Ascending aorta (tissue), 2 donors: ENCODE measurements at regions of chr3 and their contacts with region 1.

Region 1: GRCh38 chr3:134212906-134213665 is 37.6 kb downstream of the RYK start:
- DNase-seq: peak in 1 of 2 donors; percentile 87
- H3K4me3 ChIP-seq: no peak overlapping the region
- H3K27ac ChIP-seq: no peak overlapping the region
- H3K4me1 ChIP-seq: no peaks in the 10 kb centered on the region
- H3K27me3 ChIP-seq: no peaks in the 10 kb centered on the region
- CTCF ChIP-seq: peak; percentile 82 to 96 (median 95)

Region 2: GRCh38 chr3:134134240-134134639 is 78.8 kb before region 1 on chr3:
- intact Hi-C with region 1: no loop called
- DNase-seq: no peak
- H3K4me3 ChIP-seq: no peak overlapping the region
- H3K27ac ChIP-seq: no peak overlapping the region
- H3K4me1 ChIP-seq: no peaks in the 10 kb centered on the region
- H3K27me3 ChIP-seq: no peaks in the 10 kb centered on the region
- CTCF ChIP-seq: no peak

Region 3: DNA sequence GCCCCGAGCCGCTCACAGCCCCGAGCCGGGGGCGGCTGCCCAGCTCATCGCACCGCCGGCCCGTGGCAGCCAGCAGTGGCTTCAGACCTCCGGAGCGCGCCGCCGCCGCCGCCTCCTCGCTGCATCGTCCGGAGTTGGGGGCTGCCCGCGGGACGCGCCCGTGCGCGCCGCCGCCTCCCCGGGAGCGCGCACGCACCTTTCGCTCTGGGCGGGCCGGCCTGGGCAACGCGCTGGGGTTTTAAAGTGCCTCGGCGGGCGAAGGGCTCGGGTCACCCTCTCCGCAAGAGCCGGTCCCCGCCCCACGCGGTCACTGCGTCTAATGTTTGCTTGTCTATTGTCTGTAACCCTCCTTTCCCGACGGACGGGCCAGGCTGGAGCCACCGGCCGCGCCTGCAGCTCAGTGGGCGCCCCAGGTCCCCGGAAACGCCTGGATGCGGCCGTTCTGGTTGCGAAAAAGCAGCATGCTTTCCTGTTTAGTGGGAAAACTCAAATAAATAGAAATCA is 37.7 kb after region 1 on chr3 and contains the start of gene RYK:
- intact Hi-C with region 1: loop called (anchors 5 kb)
- DNase-seq: peak; percentile 32 to 88
- H3K4me3 ChIP-seq: peak within 1 kb of the TSS; percentile 85 to 98
- H3K27ac ChIP-seq: peak within 1 kb of the TSS; percentile 87 to 98
- H3K4me1 ChIP-seq: peaks cover 0 to 15% of the 10 kb centered on the region in 2 donors
- H3K27me3 ChIP-seq: no peaks in the 10 kb centered on the region
- CTCF ChIP-seq: no peak
- total RNA-seq, gene RYK: 13.5 TPM

Region 4: GRCh38 chr3:134299185-134299887 is 86.2 kb after region 1 on chr3:
- intact Hi-C with region 1: loop called (anchors 1 kb)
- DNase-seq: no peak
- H3K4me3 ChIP-seq: no peak overlapping the region
- H3K27ac ChIP-seq: no peak overlapping the region
- H3K4me1 ChIP-seq: no peaks in the 10 kb centered on the region
- H3K27me3 ChIP-seq: no peaks in the 10 kb centered on the region
- CTCF ChIP-seq: peak; percentile 25 to 55 (median 31)

Region 5: DNA sequence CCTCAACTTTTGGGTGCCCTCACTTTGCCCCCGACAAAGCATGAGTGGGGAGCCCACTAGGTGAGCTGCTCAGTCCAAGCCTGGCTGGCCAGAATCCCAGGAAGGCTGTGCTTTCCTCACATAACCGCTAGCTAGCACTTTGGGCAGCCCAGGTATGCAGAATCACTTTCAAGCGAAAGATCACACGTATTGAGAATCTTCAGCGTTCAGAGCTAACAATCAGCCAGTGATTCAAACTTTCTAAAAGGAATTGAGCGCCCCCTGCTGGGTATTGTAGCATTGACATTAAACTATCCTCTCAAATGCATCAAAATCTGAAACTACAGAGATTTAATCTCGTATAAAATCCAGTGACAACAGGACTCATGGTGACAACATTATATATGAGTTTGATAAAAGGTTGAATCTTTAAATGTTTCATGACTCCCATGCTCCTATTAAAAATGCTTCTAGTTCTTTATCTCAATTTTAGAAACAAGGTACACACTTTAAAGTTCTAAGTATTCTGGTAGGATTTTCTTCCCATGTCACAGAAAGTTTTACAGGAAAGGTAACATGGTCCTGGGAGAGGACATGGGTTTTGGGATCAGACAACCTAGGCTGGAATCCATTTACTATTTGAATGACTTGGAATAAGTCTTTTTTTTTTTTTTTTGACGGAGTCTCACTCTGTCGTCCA is 260.9 kb after region 1 on chr3:
- intact Hi-C with region 1: loop called (anchors 5 kb)
- DNase-seq: peak in 1 of 2 donors; percentile 91
- H3K4me3 ChIP-seq: no peak overlapping the region
- H3K27ac ChIP-seq: no peak overlapping the region
- H3K4me1 ChIP-seq: peaks cover 0 to 4% of the 10 kb centered on the region in 2 donors
- H3K27me3 ChIP-seq: no peaks in the 10 kb centered on the region
- CTCF ChIP-seq: peak; percentile 76 to 81 (median 77)

Region 6: GRCh38 chr3:134494495-134494894 is 281.4 kb after region 1 on chr3:
- intact Hi-C with region 1: loop called (anchors 5 kb)
- DNase-seq: no peak
- H3K4me3 ChIP-seq: no peak overlapping the region
- H3K27ac ChIP-seq: no peak overlapping the region
- H3K4me1 ChIP-seq: no peaks in the 10 kb centered on the region
- H3K27me3 ChIP-seq: no peaks in the 10 kb centered on the region
- CTCF ChIP-seq: no peak